Lower leg skin (tissue), 4 donors: ENCODE measurements at regions of chr5 and their contacts with region 1.

Region 1: GRCh38 chr5:5419294-5420210 is 2.9 kb upstream of the ICE1 start:
- DNase-seq: no peak
- H3K4me3 ChIP-seq: no peak overlapping the region
- CTCF ChIP-seq: peak in 1 of 3 donors; percentile 12
- POLR2A ChIP-seq: no peak

Region 2: GRCh38 chr5:4879693-4880303 is 539.8 kb before region 1 on chr5:
- intact Hi-C with region 1: loop called (anchors 10 kb)
- DNase-seq: peak; percentile 58 to 92
- H3K4me3 ChIP-seq: no peak overlapping the region
- CTCF ChIP-seq: peak in 1 of 3 donors; percentile 14
- POLR2A ChIP-seq: no peak

Region 3: DNA sequence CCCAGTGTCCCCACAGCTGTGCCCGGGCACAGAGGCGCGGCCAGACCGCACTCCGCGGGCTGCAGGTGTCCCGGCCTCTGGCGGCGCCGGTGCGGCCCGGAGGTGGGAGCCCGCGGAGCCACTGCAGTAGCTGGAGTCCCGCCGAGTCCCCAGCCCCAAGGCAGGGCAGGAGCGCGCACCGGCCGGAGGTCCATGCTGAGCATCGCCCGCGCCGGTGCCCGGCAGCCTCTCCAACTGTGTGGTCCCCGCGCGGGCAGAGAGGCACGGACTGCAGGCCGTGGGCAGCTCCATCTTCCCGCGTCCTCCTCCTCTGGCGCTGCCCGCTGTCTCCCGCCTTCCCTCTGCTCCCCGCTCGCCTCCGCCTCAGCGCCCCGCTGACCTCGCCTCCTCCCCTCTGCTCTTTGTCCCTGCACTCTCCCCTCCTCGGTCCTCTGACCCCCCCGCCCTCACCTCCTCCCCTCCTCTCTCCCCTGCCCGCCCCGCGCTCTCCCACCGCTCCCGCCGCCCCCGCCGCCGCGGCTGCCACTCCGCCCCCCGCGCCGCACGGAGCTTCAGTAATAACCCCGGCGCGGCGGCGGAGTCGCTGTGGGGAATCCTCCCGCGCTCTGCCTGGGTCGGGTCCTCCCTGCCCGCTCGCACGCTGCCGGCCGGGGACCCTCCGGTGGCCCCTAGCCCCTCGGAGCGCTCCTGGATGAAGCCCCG is 279.6 kb before region 1 on chr5 and contains the start of gene ADAMTS16:
- intact Hi-C with region 1: loop called (anchors 5 kb)
- DNase-seq: no peak
- H3K4me3 ChIP-seq: no peak within 1 kb of the TSS
- CTCF ChIP-seq: no peak
- POLR2A ChIP-seq: no peak
- total RNA-seq, gene ADAMTS16: 0.55 TPM in 1 of 4 donors, not detected in the others

Region 4: GRCh38 chr5:5270958-5271605 is 148.5 kb before region 1 on chr5:
- intact Hi-C with region 1: no loop called
- DNase-seq: peak in 1 of 2 donors; percentile 32
- H3K4me3 ChIP-seq: no peak overlapping the region
- CTCF ChIP-seq: no peak
- POLR2A ChIP-seq: no peak

Region 5: GRCh38 chr5:6652025-6652424 is 1232.5 kb after region 1 on chr5:
- intact Hi-C with region 1: no loop called
- DNase-seq: no peak
- H3K4me3 ChIP-seq: no peak overlapping the region
- CTCF ChIP-seq: no peak
- POLR2A ChIP-seq: no peak